CD8-positive, alpha-beta memory T cell (primary cell): ENCODE measurements at regions of chr1 and their contacts with region 1.

Region 1: GRCh38 chr1:224458996-224459395 is 24.4 kb upstream of the WDR26 start:
- DNase-seq: no peak
- H3K4me3 ChIP-seq: no peak overlapping the region
- H3K4me3 Mint-ChIP-seq: no peak overlapping the region
- H3K27ac ChIP-seq: no peak overlapping the region
- H3K27ac Mint-ChIP-seq: no peak overlapping the region
- H3K4me1 ChIP-seq: peaks cover 6% of the 10 kb centered on the region
- H3K4me1 Mint-ChIP-seq: peaks cover 8 to 12% (median 9%) of the 10 kb centered on the region in 3 donors
- H3K27me3 ChIP-seq: no peaks in the 10 kb centered on the region
- H3K27me3 Mint-ChIP-seq: no peaks in the 10 kb centered on the region

Region 2: DNA sequence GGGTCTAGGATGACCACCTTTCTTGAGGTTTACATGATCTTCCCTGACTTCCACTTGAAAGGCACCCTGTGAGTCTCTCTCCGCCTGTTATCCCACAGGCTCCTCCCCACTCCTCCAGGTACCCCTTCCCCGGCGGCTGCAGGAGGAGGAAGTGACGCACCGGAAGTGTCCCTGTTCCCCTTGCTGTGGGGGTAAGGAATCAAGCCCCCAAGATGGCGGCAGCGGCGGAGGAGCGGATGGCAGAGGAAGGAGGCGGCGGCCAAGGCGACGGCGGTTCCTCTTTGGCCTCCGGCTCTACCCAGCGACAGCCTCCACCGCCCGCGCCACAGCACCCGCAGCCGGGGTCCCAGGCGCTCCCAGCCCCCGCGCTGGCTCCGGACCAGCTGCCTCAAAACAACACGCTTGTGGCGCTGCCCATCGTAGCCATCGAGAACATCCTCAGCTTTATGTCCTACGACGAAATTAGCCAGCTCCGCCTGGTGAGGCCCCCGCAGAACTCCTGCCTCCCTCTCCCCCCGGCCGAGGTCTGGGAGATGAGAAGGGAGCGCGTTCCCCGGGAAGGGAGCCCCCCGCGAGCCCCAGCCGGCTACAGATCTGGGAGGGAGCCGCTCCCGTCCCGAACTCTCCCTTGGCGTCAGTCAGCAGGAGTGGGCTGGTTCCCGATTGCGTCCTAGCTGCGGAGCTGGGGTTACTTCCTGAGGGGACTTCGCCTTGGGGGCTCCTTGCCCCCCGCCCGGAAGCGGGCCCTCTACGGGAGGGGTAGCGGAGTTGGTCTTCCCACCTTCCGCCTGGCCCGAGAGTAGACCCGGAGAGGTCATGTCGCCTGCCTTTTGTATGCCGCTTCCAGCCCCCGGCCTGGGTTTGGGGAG is 344.8 kb before region 1 on chr1 and contains the start of gene FBXO28:
- CTCF ChIA-PET with region 1: interaction called, 12 read pairs
- POLR2A ChIA-PET with region 1: no interaction called
- DNase-seq: peak; percentile 86 to 96 (median 88)
- H3K4me3 ChIP-seq: peak within 1 kb of the TSS; percentile 77
- H3K4me3 Mint-ChIP-seq: peak within 1 kb of the TSS; percentile 89 to 94 (median 92)
- H3K27ac ChIP-seq: peak within 1 kb of the TSS; percentile 89
- H3K27ac Mint-ChIP-seq: peak within 1 kb of the TSS; percentile 88 to 99 (median 94)
- H3K4me1 ChIP-seq: peaks cover 24% of the 10 kb centered on the region
- H3K4me1 Mint-ChIP-seq: peaks cover 26 to 41% (median 32%) of the 10 kb centered on the region in 3 donors
- H3K27me3 ChIP-seq: no peaks in the 10 kb centered on the region
- H3K27me3 Mint-ChIP-seq: peaks cover 5 to 13% of the 10 kb centered on the region in 2 donors
- total RNA-seq, gene FBXO28: 31.6 to 32.2 TPM

Region 3: GRCh38 chr1:224245188-224245587 is 213.8 kb before region 1 on chr1:
- CTCF ChIA-PET with region 1: no interaction called
- POLR2A ChIA-PET with region 1: no interaction called
- DNase-seq: peak in 2 of 5 donors; percentile 10 to 25
- H3K4me3 ChIP-seq: no peak overlapping the region
- H3K4me3 Mint-ChIP-seq: peak overlapping the region in 4 of 7 donors; percentile 35 to 74 (median 44)
- H3K27ac ChIP-seq: no peak overlapping the region
- H3K27ac Mint-ChIP-seq: peak overlapping the region; percentile 55 to 95 (median 92)
- H3K4me1 ChIP-seq: peaks cover 17% of the 10 kb centered on the region
- H3K4me1 Mint-ChIP-seq: peaks cover 12 to 24% (median 16%) of the 10 kb centered on the region in 3 donors
- H3K27me3 ChIP-seq: no peaks in the 10 kb centered on the region
- H3K27me3 Mint-ChIP-seq: no peaks in the 10 kb centered on the region

Region 4: DNA sequence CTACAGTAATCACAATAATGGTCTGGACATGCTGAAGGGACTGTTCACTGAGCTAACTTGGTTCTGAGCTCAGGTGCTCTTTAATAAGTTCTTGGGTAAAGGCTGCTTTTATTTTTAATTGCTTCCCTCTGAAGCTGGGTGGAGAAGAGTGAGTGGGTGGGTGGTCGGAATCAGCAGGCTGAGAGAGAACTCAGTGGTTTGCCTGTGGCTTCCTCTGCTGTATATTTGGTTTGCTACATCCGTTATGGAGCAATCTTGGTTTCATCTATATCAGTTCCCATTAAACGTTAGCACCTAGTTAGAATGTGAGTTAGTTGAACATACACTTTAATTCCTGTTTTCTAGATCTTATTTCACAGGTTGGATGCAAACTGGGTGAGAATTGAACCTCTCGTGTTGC is 79.0 kb before region 1 on chr1:
- CTCF ChIA-PET with region 1: interaction called, 23 read pairs
- POLR2A ChIA-PET with region 1: no interaction called
- DNase-seq: peak in 4 of 5 donors; percentile 25 to 66 (median 58)
- H3K4me3 ChIP-seq: peak overlapping the region; percentile 26
- H3K4me3 Mint-ChIP-seq: peak overlapping the region; percentile 19 to 85 (median 70)
- H3K27ac ChIP-seq: no peak overlapping the region
- H3K27ac Mint-ChIP-seq: peak overlapping the region; percentile 28 to 98 (median 66)
- H3K4me1 ChIP-seq: peaks cover 82% of the 10 kb centered on the region
- H3K4me1 Mint-ChIP-seq: peaks cover 80 to 88% (median 82%) of the 10 kb centered on the region in 3 donors
- H3K27me3 ChIP-seq: no peaks in the 10 kb centered on the region
- H3K27me3 Mint-ChIP-seq: no peaks in the 10 kb centered on the region

Region 5: DNA sequence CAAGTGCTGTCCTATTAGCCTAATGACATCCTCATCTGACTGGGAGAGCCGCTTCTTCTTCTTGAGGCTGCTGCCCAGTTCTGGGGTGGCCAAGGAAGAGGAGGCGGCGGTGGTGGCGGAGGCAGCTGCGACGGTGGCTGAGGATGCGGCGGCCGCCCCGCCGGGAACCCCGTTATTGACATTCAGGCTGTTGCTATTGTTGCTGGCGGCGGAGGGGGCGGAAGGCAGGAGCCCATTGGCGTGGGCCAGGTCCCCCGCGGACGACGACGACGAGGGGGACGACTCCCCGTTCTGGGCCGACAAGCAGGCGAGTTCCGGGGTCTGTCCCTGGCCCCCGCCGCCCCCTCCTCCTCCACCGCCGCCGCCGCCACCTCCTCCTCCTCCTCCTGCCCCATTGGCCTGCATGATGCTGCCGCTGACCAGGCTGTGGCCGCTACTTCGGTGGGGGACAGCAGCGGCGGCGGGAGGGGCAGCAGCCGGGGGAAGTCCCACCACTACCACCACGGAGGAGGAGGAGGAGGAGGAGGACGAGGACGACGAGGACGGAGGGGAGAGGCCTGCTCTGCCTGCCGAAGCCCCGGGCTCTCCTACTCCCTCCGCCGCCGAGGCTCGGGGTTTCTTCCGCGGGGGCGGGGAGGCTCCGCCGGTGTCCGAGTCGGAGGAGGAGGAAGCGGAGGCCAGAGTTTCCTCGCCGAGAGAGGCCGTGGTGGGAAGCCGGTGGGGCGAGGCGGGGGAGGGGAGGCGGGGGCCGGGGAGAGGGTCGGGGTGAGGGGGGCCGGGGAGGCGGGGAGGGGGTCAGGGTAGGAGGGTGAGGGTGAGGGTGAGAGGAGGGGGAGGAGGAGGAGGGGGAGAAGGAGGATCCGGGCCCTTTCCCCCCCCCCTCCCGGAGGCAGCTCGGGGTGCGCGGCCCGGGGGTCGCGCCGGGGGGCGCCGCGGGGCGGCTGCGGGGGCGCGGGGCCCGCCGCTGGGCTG is 25.0 kb before region 1 on chr1:
- CTCF ChIA-PET with region 1: interaction called, 13 read pairs
- POLR2A ChIA-PET with region 1: no interaction called
- DNase-seq: peak; percentile 55 to 82 (median 61)
- H3K4me3 ChIP-seq: peak overlapping the region; percentile 47
- H3K4me3 Mint-ChIP-seq: peak overlapping the region; percentile 90 to 98 (median 96)
- H3K27ac ChIP-seq: peak overlapping the region; percentile 72
- H3K27ac Mint-ChIP-seq: peak overlapping the region; percentile 92 to 99 (median 98)
- H3K4me1 ChIP-seq: peaks cover 56% of the 10 kb centered on the region
- H3K4me1 Mint-ChIP-seq: peaks cover 52 to 73% (median 67%) of the 10 kb centered on the region in 3 donors
- H3K27me3 ChIP-seq: no peaks in the 10 kb centered on the region
- H3K27me3 Mint-ChIP-seq: no peaks in the 10 kb centered on the region

Region 6: GRCh38 chr1:224447251-224447650 is 11.7 kb before region 1 on chr1:
- CTCF ChIA-PET with region 1: interaction called, 17 read pairs
- POLR2A ChIA-PET with region 1: no interaction called
- DNase-seq: no peak
- H3K4me3 ChIP-seq: no peak overlapping the region
- H3K4me3 Mint-ChIP-seq: no peak overlapping the region
- H3K27ac ChIP-seq: no peak overlapping the region
- H3K27ac Mint-ChIP-seq: peak overlapping the region in 1 of 8 donors; percentile 47
- H3K4me1 ChIP-seq: no peaks in the 10 kb centered on the region
- H3K4me1 Mint-ChIP-seq: peaks cover 8 to 23% (median 15%) of the 10 kb centered on the region in 3 donors
- H3K27me3 ChIP-seq: no peaks in the 10 kb centered on the region
- H3K27me3 Mint-ChIP-seq: no peaks in the 10 kb centered on the region